ENCODE measurements at regions of chr6 and their contacts with region 1.

Region 1: DNA sequence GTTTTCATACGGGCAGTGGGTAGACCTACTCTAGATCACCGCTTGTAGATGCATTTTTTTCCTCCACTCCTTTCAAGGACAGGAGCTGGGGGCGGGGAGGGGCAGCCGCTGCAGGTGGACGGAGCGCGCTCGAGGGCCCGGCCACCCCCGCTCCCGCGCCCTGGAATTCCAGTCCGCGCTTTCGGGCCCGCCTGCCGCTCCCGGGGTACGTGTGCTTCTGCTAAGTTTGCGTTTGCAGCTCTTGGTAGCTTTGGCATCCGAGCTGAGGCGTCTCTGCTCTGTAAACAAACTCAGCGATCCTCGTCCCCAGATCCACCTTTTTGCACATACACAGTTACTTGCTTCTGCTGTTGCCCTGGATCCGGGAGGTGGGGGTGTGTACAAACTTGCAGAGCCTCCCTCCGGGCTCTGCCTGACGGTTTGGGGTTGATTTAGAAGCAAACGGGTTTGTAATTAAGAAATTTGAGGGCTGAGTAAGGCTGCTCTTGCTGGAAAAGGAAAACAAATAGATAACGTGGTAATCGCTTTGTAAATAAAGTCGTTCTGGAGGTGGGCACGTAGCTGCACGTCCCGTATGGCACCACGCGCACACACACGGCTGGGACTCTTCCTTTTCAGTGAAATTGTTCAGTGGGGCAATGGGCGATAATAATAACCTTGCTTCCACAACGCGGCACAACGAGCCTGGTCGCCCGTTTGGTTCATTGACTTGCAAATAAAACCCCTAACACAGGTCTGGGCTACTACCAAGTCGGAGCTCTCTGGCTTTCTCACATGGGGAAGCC is 976 bp upstream of the CITED2 start:
- DNase-seq: peak; percentile 84

Region 2: GRCh38 chr6:139480356-139480833 is 105.0 kb after region 1 on chr6:
- CTCF ChIA-PET with region 1: interaction called, 3 read pairs
- POLR2A ChIA-PET with region 1: interaction called, 29 read pairs
- DNase-seq: no peak

Region 3: DNA sequence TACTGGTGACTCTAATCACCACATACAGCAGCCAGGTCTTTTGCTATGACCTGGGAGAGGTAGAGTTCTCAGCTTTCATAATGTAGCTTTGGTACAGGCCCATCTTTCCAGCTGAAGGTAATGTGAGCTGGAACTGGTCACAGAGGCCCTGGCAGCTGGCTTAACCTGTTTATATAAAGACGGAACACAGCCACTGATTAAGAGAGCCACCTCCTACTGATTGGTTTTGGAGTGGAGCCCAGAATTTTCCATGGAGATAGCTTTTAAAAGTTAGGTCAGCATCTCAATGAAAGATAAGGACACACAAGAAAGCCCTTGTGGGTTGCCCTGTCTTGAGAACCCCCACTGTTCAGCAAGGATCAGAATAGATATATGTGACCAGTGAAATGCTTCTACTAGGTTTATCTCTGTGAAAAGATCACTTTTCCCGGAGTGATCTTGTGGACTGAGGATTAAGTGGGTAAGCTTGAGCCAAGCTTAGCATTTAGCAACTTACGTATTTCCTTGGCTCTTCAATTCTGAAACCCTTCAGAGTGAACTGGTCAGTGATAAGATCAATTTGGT is 212.7 kb after region 1 on chr6:
- CTCF ChIA-PET with region 1: interaction called, 3 read pairs
- POLR2A ChIA-PET with region 1: interaction called, 26 read pairs
- DNase-seq: peak; percentile 40

Region 4: GRCh38 chr6:139708337-139709199 is 333.1 kb after region 1 on chr6:
- CTCF ChIA-PET with region 1: interaction called, 5 read pairs
- POLR2A ChIA-PET with region 1: interaction called, 23 read pairs
- DNase-seq: peak; percentile 52

Region 5: DNA sequence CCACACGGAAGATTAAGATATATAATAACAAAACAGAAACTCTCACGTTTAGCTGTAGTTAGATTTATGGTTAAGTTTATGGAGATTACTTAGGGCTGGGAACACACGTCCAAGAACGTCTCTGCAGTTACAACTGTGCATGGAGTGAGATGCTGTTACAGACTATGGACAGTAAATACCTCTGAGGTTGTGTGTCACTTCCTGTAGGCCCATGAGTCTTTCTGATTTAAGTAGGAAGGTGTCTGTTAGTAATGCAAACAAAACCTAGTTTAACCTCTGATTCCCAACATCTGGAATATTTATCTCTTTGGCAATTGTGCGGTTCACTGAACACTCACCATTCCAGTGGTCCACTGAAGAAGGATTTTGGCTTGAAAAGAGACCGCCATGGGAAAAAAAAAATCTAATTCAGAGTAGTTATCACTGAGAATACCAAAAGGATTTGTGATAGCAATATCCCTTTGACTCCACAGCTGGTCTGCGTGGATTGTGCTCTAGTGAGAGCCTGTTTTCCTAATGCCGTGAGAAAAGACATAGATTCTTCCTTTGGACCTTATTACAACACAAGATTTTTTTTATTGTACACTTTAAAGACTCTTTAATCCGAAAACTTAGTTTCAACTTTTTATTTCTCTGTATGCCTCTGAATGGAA is 477.2 kb after region 1 on chr6:
- CTCF ChIA-PET with region 1: interaction called, 4 read pairs
- POLR2A ChIA-PET with region 1: interaction called, 19 read pairs
- DNase-seq: no peak

Region 6: GRCh38 chr6:139990856-139991465 is 615.5 kb after region 1 on chr6:
- CTCF ChIA-PET with region 1: no interaction called
- POLR2A ChIA-PET with region 1: interaction called, 11 read pairs
- DNase-seq: no peak

Region 7: GRCh38 chr6:141153563-141153962 is 1778.1 kb after region 1 on chr6:
- CTCF ChIA-PET with region 1: no interaction called
- POLR2A ChIA-PET with region 1: no interaction called
- DNase-seq: no peak

Measured in HEK293T (cell line).